ENCODE measurements at regions of chr16 and their contacts with region 1.

Region 1: DNA sequence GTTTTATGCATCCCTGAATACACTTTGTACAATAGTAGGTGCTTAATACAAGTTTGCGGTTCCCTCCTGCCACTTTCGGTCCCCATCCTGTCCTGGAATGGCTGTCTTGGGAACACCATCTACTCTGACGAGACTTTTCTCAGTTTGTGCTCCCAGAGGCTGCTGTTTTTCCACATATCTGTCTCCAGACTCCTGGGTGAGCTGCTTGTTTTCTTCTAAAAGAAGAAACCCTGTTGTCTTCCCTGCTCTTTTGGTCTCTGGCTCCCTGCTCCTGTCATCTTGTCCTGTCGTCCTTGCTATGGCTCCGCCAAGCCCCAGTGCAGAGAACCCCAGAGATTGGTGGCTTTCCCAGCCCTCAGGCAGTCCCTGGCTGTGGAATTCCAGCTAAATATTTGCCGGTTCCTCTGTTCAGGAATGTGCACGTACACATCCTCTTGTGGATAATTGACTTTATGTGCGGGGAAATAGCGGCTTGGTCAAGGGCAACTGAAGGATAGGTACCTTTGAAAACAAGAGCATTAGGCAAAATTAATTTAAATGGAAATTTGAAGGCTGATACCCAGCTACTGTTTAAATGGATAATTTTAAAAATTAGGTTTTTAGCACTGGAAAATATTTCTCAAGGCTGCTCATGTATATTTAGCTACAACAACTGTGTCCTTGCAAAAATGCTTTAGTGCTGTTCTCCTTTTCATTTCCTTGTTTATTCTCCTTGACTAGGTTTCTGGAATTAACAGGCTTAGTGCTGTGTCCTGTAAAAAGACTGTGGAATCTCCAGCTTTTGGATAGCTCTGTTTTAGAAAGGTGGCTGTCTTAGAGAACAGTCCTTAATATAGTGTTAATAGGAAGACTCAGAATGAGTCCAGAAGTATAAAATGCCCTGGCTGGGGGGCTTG is 50.2 kb upstream of the SLC12A3 start:
- DNase-seq: peak; percentile 95
- ATAC-seq: peak; percentile 98
- H3K4me3 ChIP-seq: peak overlapping the region; percentile 14 to 66 (median 49)
- H3K27ac ChIP-seq: peak overlapping the region; percentile 92
- H3K4me1 ChIP-seq: peaks cover 85% of the 10 kb centered on the region
- H3K27me3 ChIP-seq: no peaks in the 10 kb centered on the region
- CTCF ChIP-seq: no peak
- EP300 ChIP-seq: peak in 1 of 2 experiments; percentile 81; a peak in 2 of 4 replicates
- POLR2A ChIP-seq: peak; percentile 51 to 60
- RAD21 ChIP-seq: no peak

Region 2: GRCh38 chr16:56836410-56837230 is 21.8 kb after region 1 on chr16:
- CTCF ChIA-PET with region 1: no interaction called
- POLR2A ChIA-PET with region 1: interaction called, 13 read pairs
- in situ Hi-C with region 1: no loop called
- intact Hi-C with region 1: loop called (anchors 2 kb)
- DNase-seq: no peak
- ATAC-seq: no peak
- H3K4me3 ChIP-seq: no peak overlapping the region
- H3K27ac ChIP-seq: peak overlapping the region; percentile 19
- H3K4me1 ChIP-seq: peaks cover 67% of the 10 kb centered on the region
- H3K27me3 ChIP-seq: no peaks in the 10 kb centered on the region
- CTCF ChIP-seq: no peak
- EP300 ChIP-seq: no peak
- POLR2A ChIP-seq: no peak
- RAD21 ChIP-seq: no peak

Region 3: DNA sequence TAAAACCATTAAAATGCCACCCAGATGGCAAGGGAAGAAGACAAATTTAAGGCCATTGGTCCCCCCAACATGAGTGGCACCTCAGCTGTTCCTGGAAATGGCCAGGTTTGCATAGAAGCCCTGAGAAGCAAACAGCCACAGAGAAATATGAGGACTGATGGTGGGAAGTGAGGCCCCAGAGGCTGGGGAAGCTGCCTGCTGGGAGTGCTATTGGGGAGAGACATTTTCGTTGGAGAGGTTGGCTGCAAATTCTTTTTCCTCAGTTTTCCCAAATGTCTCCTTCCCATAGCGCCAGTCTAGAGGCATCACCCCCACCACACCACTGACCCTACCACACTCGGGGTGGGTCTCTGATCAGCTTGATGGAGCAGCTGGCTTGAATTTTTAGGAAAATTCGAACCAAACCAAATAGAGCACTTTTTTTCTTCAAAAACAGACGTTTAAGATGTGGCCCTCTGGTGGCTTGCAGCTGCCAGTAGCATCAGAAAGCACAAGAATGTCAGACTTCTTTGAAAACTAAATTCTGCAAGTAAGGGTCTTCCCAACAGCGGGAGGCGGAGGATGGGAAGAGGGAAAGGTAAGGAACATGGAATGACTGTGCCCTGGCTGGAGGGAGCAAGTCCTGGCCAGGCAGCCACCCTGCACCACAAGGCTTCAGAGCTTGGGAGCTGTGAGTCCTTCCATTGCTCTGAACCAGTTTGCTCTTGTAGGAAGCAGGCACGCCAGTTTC is 37.1 kb after region 1 on chr16:
- CTCF ChIA-PET with region 1: no interaction called
- POLR2A ChIA-PET with region 1: interaction called, 41 read pairs
- in situ Hi-C with region 1: no loop called
- intact Hi-C with region 1: loop called (anchors 1 kb)
- DNase-seq: peak; percentile 35
- ATAC-seq: no peak
- H3K4me3 ChIP-seq: no peak overlapping the region
- H3K27ac ChIP-seq: peak overlapping the region; percentile 7
- H3K4me1 ChIP-seq: peaks cover 78% of the 10 kb centered on the region
- H3K27me3 ChIP-seq: no peaks in the 10 kb centered on the region
- CTCF ChIP-seq: peak; percentile 53
- EP300 ChIP-seq: no peak
- POLR2A ChIP-seq: no peak
- RAD21 ChIP-seq: peak; percentile 53; the same call in 1 of the 2 replicates

Region 4: DNA sequence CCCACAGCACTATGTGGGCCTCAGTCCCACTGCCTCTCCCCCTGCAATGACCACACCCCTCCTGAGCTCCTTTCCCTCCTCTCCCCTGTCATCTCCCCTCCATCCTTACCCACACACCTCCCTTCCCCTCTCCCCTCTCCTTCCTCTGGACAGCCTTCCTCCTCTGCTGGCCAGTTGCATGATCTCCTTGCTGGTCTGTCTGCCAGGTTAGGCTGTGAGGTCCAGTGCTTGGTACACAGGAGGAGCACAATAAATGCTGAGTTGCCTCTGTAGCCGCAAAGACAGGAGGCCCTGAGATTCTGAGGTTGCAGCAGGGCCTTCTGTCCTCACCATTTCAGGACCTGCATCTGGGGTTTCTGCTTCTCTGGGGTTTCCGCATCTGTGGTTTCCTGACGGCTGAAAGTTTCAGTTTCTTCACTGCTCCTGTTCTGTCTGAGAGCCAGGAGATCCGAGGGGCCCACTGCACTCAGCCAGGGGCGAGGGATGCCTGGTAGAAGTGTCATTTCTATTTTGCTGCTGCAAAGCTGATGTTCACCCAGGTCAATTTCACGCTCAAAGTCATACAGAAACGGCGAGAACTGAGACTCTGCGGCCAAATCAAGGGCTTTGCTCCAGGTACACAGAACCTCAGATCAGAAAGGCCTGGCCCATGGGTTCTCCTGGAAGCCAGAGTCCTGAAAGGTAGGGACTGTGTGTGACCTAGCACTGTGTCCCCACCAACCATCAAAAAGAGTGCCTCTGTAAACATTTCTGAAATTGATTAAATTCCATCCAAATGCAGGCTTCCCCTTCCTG is 45.6 kb after region 1 on chr16:
- CTCF ChIA-PET with region 1: no interaction called
- POLR2A ChIA-PET with region 1: interaction called, 13 read pairs
- in situ Hi-C with region 1: no loop called
- intact Hi-C with region 1: no loop called
- DNase-seq: peak; percentile 67
- ATAC-seq: peak; percentile 71
- H3K4me3 ChIP-seq: peak overlapping the region; percentile 33 to 62 (median 44)
- H3K27ac ChIP-seq: peak overlapping the region; percentile 34
- H3K4me1 ChIP-seq: peaks cover 87% of the 10 kb centered on the region
- H3K27me3 ChIP-seq: no peaks in the 10 kb centered on the region
- CTCF ChIP-seq: no peak
- EP300 ChIP-seq: no peak
- POLR2A ChIP-seq: no peak
- RAD21 ChIP-seq: no peak